ENCODE measurements at regions of chr3 and their contacts with region 1.

Region 1: DNA sequence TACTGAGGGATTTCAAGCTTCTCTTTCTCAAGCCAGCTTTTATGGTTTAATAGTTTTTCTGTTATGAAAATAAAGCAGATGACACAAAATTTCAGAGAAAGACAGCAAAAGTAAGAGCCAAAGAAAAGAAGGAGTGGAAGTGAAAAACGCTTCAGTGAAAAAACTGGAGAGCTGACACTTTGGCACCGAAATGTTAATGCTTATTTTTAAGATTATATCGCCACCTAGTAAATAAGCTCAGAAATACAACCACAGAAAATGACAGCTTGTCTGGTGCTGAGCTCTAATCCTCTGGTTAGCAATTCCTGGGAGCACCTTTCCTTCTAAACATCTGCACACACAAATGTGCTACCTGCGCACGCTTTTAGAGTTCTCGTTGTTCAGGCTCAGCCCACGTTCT is 101.6 kb downstream of the ZPLD1 start:
- DNase-seq: peak; percentile 33
- ATAC-seq: peak; percentile 54; the same call in 1 of the 2 replicates
- H3K4me3 ChIP-seq: no peak overlapping the region
- H3K27ac ChIP-seq: no peak overlapping the region
- H3K4me1 ChIP-seq: no peaks in the 10 kb centered on the region
- H3K27me3 ChIP-seq: no peaks in the 10 kb centered on the region
- CTCF ChIP-seq: peak; percentile 55
- POLR2A ChIP-seq: no peak
- RAD21 ChIP-seq: peak; percentile 59

Region 2: GRCh38 chr3:101803173-101803782 is 733.2 kb before region 1 on chr3:
- CTCF ChIA-PET with region 1: no interaction called
- POLR2A ChIA-PET with region 1: no interaction called
- dilution Hi-C with region 1: loop called (anchors 10 kb)
- in situ Hi-C with region 1: loop called (anchors 10 kb)
- intact Hi-C with region 1: loop called (anchors 2 kb)
- DNase-seq: peak; percentile 79
- ATAC-seq: peak; percentile 99
- H3K4me3 ChIP-seq: no peak overlapping the region
- H3K27ac ChIP-seq: no peak overlapping the region
- H3K4me1 ChIP-seq: no peaks in the 10 kb centered on the region
- H3K27me3 ChIP-seq: no peaks in the 10 kb centered on the region
- CTCF ChIP-seq: peak; percentile 78
- POLR2A ChIP-seq: no peak
- RAD21 ChIP-seq: peak; percentile 46

Region 3: GRCh38 chr3:101809178-101810021 is 727.1 kb before region 1 on chr3:
- CTCF ChIA-PET with region 1: no interaction called
- POLR2A ChIA-PET with region 1: no interaction called
- dilution Hi-C with region 1: loop called (anchors 10 kb)
- in situ Hi-C with region 1: loop called (anchors 10 kb)
- intact Hi-C with region 1: loop called (anchors 2 kb)
- DNase-seq: peak; percentile 56
- ATAC-seq: peak; percentile 77
- H3K4me3 ChIP-seq: no peak overlapping the region
- H3K27ac ChIP-seq: no peak overlapping the region
- H3K4me1 ChIP-seq: peaks cover 2% of the 10 kb centered on the region; the same call in 1 of the 2 replicates
- H3K27me3 ChIP-seq: no peaks in the 10 kb centered on the region
- CTCF ChIP-seq: peak; percentile 72
- POLR2A ChIP-seq: no peak
- RAD21 ChIP-seq: peak; percentile 75

Region 4: DNA sequence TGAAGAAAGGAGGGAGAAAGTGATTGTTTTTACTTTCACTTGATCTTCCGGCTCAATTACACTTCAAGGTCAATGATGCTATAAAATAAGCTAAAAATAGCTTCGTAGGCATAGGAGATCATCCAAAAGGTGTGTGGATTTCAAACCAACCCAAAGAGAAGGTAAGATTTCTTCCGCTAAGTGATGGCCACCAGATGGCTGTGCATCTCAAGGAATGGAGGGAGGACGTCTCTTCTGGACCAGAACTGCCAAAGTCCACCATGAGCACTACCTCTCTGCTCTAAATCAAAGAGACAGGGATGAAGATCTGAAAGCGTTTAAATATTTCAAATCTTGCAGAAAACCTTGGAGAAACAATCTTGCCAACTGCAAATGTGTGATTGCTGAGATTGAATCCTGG is 300.8 kb before region 1 on chr3:
- CTCF ChIA-PET with region 1: interaction called, 22 read pairs
- POLR2A ChIA-PET with region 1: no interaction called
- dilution Hi-C with region 1: loop called (anchors 25 kb)
- in situ Hi-C with region 1: no loop called
- intact Hi-C with region 1: loop called (anchors 1 kb)
- DNase-seq: peak; percentile 27
- ATAC-seq: peak; percentile 42; the same call in 1 of the 2 replicates
- H3K4me3 ChIP-seq: no peak overlapping the region
- H3K27ac ChIP-seq: no peak overlapping the region
- H3K4me1 ChIP-seq: no peaks in the 10 kb centered on the region
- H3K27me3 ChIP-seq: peaks cover 17% of the 10 kb centered on the region
- CTCF ChIP-seq: peak; percentile 60
- POLR2A ChIP-seq: no peak
- RAD21 ChIP-seq: peak; percentile 77

Region 5: DNA sequence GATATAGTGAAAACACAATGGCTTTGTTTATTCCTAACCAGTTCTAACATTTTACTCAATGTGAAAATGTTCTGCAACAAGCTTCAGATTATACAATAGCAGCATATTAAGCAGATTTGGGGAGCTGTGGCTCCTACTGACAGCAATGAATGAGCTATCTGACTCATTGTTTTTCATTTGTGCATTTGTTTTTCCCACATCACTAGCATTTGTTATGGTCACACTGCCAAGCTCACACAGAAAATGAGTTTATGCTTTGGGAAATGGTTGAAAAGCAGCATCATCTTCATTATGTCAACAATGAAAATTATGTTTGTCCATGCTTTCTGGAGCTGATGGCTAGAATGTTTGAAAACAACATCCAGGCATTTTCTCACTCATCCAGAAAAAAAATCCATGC is 48.1 kb before region 1 on chr3:
- CTCF ChIA-PET with region 1: no interaction called
- POLR2A ChIA-PET with region 1: no interaction called
- dilution Hi-C with region 1: no loop called
- in situ Hi-C with region 1: no loop called
- intact Hi-C with region 1: no loop called
- DNase-seq: no peak
- ATAC-seq: no peak
- H3K4me3 ChIP-seq: no peak overlapping the region
- H3K27ac ChIP-seq: no peak overlapping the region
- H3K4me1 ChIP-seq: no peaks in the 10 kb centered on the region
- H3K27me3 ChIP-seq: no peaks in the 10 kb centered on the region
- CTCF ChIP-seq: no peak
- POLR2A ChIP-seq: no peak
- RAD21 ChIP-seq: no peak